Activated T-helper 2 cell treated with anti-CD3 and anti-CD28 coated beads, Interferon-gamma antibody, Interleukin-2, Interleukin-4, amounts not matched to agents 10 μg/mL and 5 μg/mL and 100 μg/mL, durations not matched to agents 14 hours and 24 hours and 36 hours (primary cell): ENCODE measurements at regions of chr7 and their contacts with region 1.

Region 1: GRCh38 chr7:76133164-76133775 is 68.4 kb upstream of the SRRM3 start:
- DNase-seq: no peak
- H3K4me3 Mint-ChIP-seq: peak overlapping the region; percentile 45
- H3K27ac Mint-ChIP-seq: peak overlapping the region; percentile 67
- H3K4me1 Mint-ChIP-seq: peaks cover 40% of the 10 kb centered on the region
- H3K27me3 Mint-ChIP-seq: no peaks in the 10 kb centered on the region

Region 2: DNA sequence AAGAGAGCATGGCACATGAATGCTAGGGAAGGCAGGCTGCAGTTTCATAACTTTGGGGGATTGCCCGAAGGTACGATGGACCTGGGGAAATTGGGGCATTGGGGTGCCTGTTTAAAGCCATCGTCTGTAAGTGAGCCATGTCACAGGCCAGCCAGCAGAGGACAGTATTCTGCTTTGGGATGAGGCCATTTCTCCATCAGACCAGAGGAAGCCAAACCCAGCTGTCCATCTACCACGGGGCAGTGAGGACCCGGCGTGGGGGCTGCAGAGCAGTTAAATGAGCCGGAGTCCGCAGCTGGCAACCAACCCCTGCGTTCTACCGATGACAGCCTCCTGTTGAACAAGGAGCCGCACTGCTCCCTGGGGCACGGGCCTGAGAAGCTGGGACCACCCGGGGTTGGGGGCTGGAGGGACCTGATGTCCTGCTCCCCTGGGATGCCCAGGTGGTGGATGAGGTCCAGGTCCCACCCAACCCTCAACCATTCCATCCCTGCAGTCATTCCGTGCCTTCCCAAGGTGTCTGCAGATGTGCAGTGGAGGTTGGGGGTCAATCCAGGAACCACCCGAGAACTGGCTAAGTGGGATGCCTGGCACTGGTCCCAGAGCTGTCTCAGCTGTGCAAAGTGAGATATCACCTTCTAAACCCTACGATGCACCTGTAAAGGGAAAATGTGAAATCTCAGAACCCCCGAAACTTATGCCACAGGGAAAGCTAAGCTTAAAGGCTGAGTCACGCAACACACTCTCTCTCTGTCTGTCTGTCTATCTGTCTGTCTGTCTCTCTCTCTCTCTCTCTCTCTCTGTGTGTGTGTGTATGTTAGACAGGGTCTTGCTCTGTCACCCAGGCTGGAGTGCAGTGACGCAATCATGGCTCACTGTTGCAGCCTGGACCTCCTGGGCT is 266.5 kb before region 1 on chr7:
- intact Hi-C with region 1: loop called (anchors 10 kb)
- DNase-seq: peak; percentile 33
- H3K4me3 Mint-ChIP-seq: no peak overlapping the region
- H3K27ac Mint-ChIP-seq: no peak overlapping the region
- H3K4me1 Mint-ChIP-seq: peaks cover 22% of the 10 kb centered on the region
- H3K27me3 Mint-ChIP-seq: peaks cover 3% of the 10 kb centered on the region

Region 3: GRCh38 chr7:76047811-76048667 is 85.2 kb before region 1 on chr7 and contains the starts of genes MDH2 and STYXL1:
- intact Hi-C with region 1: loop called (anchors 5 kb)
- DNase-seq: peak; percentile 88
- H3K4me3 Mint-ChIP-seq: peak within 1 kb of the TSS; percentile 99
- H3K27ac Mint-ChIP-seq: peak within 1 kb of the TSS; percentile 97
- H3K4me1 Mint-ChIP-seq: peaks cover 35% of the 10 kb centered on the region
- H3K27me3 Mint-ChIP-seq: no peaks in the 10 kb centered on the region
- total RNA-seq, gene MDH2: 268 and 285 TPM in 2 replicates
- total RNA-seq, gene STYXL1: 27.7 and 36.1 TPM in 2 replicates

Region 4: DNA sequence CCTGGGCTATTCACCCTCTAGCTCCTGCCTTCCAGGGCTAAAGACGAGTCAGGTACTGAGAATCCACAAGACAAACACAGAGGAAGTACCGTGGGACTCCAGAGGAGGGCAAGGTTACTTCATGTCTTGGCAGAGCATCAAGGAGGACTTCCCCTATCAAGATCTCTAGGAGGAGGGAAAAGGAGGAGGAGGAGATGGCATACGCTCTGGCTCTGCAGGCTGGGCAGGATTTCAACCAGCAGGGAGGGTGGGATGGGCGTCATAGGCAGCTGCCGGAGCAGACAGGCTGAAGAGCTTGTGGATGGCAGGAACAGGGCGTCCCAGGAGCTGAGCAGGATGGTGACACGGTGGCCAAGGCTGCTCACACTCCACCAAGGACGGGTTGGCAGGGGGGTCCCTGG is 64.0 kb before region 1 on chr7:
- intact Hi-C with region 1: no loop called
- DNase-seq: no peak
- H3K4me3 Mint-ChIP-seq: no peak overlapping the region
- H3K27ac Mint-ChIP-seq: no peak overlapping the region
- H3K4me1 Mint-ChIP-seq: peaks cover 4% of the 10 kb centered on the region
- H3K27me3 Mint-ChIP-seq: no peaks in the 10 kb centered on the region

Region 5: DNA sequence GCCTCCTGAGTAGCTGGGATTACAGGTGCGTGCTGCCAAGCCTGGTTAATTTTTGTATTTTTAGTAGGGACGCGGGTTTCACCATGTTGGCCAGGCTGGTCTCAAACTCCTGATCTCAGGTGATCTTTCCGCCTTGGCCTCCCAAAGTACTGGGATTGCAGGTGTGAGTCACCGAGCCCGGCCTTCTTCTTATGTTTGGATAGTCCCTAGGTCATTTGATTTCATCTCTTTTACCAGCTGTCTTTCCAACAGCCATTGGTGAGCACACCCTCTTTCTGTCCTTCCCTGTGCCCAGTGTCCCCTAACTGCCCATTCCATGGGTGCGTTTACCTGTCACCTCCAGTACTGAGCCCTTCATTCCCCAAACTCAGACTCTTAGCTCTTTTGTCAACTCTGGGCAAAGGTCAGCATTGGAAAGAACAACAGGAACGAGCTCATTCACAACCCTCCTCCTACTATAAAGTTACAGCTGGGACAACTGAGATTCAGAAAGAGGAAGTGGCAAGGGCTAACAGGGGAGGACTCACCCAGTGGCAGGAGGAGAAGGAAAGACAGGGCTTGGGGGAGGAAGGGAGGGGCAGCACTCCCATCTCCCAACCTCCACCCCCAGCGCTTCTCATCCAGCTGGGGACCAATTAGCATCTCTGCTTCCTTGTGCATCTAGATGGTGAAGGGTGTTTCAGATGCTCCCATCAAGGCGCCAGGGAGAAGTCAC is 270.7 kb after region 1 on chr7:
- intact Hi-C with region 1: no loop called
- DNase-seq: no peak
- H3K4me3 Mint-ChIP-seq: no peak overlapping the region
- H3K27ac Mint-ChIP-seq: no peak overlapping the region
- H3K4me1 Mint-ChIP-seq: peaks cover 6% of the 10 kb centered on the region
- H3K27me3 Mint-ChIP-seq: no peaks in the 10 kb centered on the region